Prostate gland (tissue), 2 donors: ENCODE measurements at regions of chr1 and their contacts with region 1.

Region 1: GRCh38 chr1:22641906-22642636 is 1.4 kb upstream of the C1QC start:
- DNase-seq: peak; percentile 77
- H3K4me3 ChIP-seq: no peak overlapping the region
- H3K27ac ChIP-seq: no peak overlapping the region
- H3K4me1 ChIP-seq: no peaks in the 10 kb centered on the region
- H3K27me3 ChIP-seq: no peaks in the 10 kb centered on the region
- CTCF ChIP-seq: peak; percentile 78 to 97 (median 94)
- POLR2A ChIP-seq: no peak

Region 2: GRCh38 chr1:22105611-22106207 is 536.4 kb before region 1 on chr1:
- intact Hi-C with region 1: loop called (anchors 10 kb)
- DNase-seq: peak; percentile 47
- H3K4me3 ChIP-seq: no peak overlapping the region
- H3K27ac ChIP-seq: no peak overlapping the region
- H3K4me1 ChIP-seq: no peaks in the 10 kb centered on the region
- H3K27me3 ChIP-seq: no peaks in the 10 kb centered on the region
- CTCF ChIP-seq: peak; percentile 38 to 88 (median 88)
- POLR2A ChIP-seq: peak; percentile 6

Region 3: GRCh38 chr1:22416555-22417454 is 225.3 kb before region 1 on chr1:
- intact Hi-C with region 1: loop called (anchors 1 kb)
- DNase-seq: peak; percentile 74
- H3K4me3 ChIP-seq: no peak overlapping the region
- H3K27ac ChIP-seq: no peak overlapping the region
- H3K4me1 ChIP-seq: peaks cover 19% of the 10 kb centered on the region
- H3K27me3 ChIP-seq: no peaks in the 10 kb centered on the region
- CTCF ChIP-seq: peak; percentile 86 to 97 (median 94)
- POLR2A ChIP-seq: no peak

Region 4: GRCh38 chr1:22527555-22528296 is 114.3 kb before region 1 on chr1:
- intact Hi-C with region 1: loop called (anchors 2 kb)
- DNase-seq: no peak
- H3K4me3 ChIP-seq: no peak overlapping the region
- H3K27ac ChIP-seq: no peak overlapping the region
- H3K4me1 ChIP-seq: no peaks in the 10 kb centered on the region
- H3K27me3 ChIP-seq: no peaks in the 10 kb centered on the region
- CTCF ChIP-seq: no peak
- POLR2A ChIP-seq: no peak

Region 5: GRCh38 chr1:22557341-22557950 is 84.6 kb before region 1 on chr1:
- intact Hi-C with region 1: no loop called
- DNase-seq: no peak
- H3K4me3 ChIP-seq: no peak overlapping the region
- H3K27ac ChIP-seq: no peak overlapping the region
- H3K4me1 ChIP-seq: no peaks in the 10 kb centered on the region
- H3K27me3 ChIP-seq: no peaks in the 10 kb centered on the region
- CTCF ChIP-seq: no peak
- POLR2A ChIP-seq: no peak